Calu3 (cell line): ENCODE measurements at regions of chr12 and their contacts with region 1.

Region 1: DNA sequence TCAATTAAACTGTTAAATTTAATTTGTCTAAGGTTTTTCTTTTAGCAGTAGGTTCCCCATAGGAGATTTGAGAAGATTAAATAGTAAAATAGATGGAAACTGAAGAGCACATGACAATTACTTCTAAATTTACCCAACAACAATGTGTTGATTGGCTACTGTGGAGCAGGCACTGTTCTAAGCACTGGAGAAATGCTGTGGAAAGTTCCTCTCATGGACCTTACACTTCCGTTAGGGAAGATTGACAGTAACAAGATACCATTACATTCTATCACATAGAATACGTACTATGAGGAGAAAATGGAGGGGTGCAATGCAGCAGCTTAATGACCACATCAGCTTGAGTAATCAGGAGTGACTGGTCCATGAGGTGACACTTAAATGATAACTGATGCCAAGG is 8.1 kb upstream of the STAB2 start:
- DNase-seq: no peak
- H3K4me3 Mint-ChIP-seq: no peak overlapping the region
- H3K27ac Mint-ChIP-seq: no peak overlapping the region
- H3K4me1 Mint-ChIP-seq: peaks cover 8% of the 10 kb centered on the region
- H3K27me3 Mint-ChIP-seq: peaks cover 61% of the 10 kb centered on the region
- CTCF ChIP-seq: no peak

Region 2: DNA sequence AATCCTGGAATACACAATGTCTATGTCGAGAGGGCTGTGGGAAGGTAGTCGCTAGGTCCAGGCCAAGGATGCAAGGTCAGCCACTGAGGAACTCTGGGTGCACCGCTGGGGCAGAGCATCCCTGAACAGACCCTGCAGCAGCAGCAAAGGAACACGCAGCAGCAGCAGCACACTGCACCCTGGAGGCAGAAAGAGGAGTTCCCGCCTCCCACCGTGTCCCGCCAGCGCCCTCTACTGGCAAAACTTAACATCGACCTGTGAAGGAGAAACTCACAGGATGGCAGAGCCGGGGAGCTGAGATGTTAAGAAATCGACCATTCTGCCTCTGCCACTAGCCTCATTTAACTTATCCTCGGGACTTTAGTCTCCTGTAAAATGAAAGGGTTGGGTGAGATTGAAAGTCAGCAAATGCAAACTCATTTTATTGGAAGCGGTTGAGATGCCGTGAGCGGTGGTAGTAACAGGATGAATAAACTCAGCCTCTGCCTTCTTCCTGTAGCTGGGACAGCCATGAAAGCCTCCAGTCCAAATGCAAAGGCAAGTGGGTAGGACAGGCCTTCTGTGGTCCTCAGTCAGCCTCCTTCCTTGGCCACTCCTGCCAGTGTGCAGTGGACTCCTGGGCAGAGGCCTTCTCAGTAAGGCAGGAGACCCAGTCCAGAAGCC is 53.8 kb after region 1 on chr12:
- CTCF ChIA-PET with region 1: interaction called, 3 read pairs
- intact Hi-C with region 1: loop called (anchors 5 kb)
- DNase-seq: peak; percentile 74
- H3K4me3 Mint-ChIP-seq: no peak overlapping the region
- H3K27ac Mint-ChIP-seq: no peak overlapping the region
- H3K4me1 Mint-ChIP-seq: no peaks in the 10 kb centered on the region
- H3K27me3 Mint-ChIP-seq: no peaks in the 10 kb centered on the region
- CTCF ChIP-seq: peak; percentile 84